B cell (primary cell): ENCODE measurements at regions of chr19 and their contacts with region 1.

Region 1: GRCh38 chr19:33416307-33417215 is 43.1 kb downstream of the CEBPG start:
- DNase-seq: peak; percentile 66
- ATAC-seq: peak; percentile 54
- H3K4me3 ChIP-seq: peak overlapping the region in 1 of 5 experiments; percentile 34
- H3K4me3 Mint-ChIP-seq: peak overlapping the region; percentile 42
- H3K27ac ChIP-seq: no peak overlapping the region
- H3K27ac Mint-ChIP-seq: no peak overlapping the region
- H3K4me1 ChIP-seq: peaks cover 4 to 5% of the 10 kb centered on the region in 2 donors
- H3K4me1 Mint-ChIP-seq: peaks cover 5% of the 10 kb centered on the region
- H3K27me3 ChIP-seq: no peaks in the 10 kb centered on the region
- H3K27me3 Mint-ChIP-seq: no peaks in the 10 kb centered on the region
- CTCF ChIP-seq: peak; percentile 60

Region 2: GRCh38 chr19:33430674-33431277 is 14.2 kb after region 1 on chr19:
- CTCF ChIA-PET with region 1: interaction called, 11 read pairs
- POLR2A ChIA-PET with region 1: no interaction called
- intact Hi-C with region 1: no loop called
- DNase-seq: peak; percentile 51
- ATAC-seq: peak; percentile 28
- H3K4me3 ChIP-seq: no peak overlapping the region
- H3K4me3 Mint-ChIP-seq: no peak overlapping the region
- H3K27ac ChIP-seq: no peak overlapping the region
- H3K27ac Mint-ChIP-seq: no peak overlapping the region
- H3K4me1 ChIP-seq: no peaks in the 10 kb centered on the region
- H3K4me1 Mint-ChIP-seq: peaks cover 2% of the 10 kb centered on the region
- H3K27me3 ChIP-seq: no peaks in the 10 kb centered on the region
- H3K27me3 Mint-ChIP-seq: no peaks in the 10 kb centered on the region
- CTCF ChIP-seq: peak; percentile 77